Motor neuron (in vitro differentiated cells): ENCODE measurements at regions of chrX and their contacts with region 1.

Region 1: DNA sequence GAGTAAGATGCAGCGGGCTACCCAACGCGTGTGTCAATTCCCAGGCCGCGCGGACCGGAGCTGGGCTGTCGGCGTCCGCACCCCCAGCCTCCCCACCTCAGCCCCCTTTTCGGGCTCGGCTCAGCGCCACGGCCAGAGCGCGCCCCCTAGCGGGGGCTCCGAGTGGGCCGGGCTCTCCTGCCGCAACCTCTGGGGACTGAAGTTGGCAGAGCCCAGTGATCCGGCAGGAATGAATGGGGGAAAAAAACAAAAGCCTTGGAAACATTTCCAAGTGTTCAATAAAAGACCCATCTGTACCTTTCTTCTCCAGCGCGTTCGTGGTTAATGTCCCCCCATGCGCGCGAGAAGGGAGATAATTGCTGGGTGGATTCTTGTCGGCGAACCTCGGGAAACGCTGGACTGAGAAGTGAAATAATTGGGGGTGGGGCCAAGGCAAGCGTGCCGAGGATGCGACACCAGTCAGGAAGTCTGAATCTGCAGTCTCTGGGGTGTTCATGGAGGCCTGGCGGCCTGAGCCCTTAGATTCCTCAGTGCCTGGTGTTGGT is 5.2 kb upstream of the ARX start:
- ATAC-seq: peak; percentile 68 to 86 (median 78)
- H3K4me3 ChIP-seq: peak overlapping the region in 1 of 5 donors; percentile 23
- H3K27ac ChIP-seq: no peak overlapping the region
- H3K4me1 ChIP-seq: peaks cover 0 to 2% of the 10 kb centered on the region in 2 donors

Region 2: GRCh38 chrX:24760363-24761000 is 260.5 kb before region 1 on chrX:
- in situ Hi-C with region 1: loop called in 1 of 9 experiments (anchors 25 kb)
- ATAC-seq: peak in 3 of 8 experiments; percentile 54 to 72 (median 57)
- H3K4me3 ChIP-seq: no peak overlapping the region
- H3K27ac ChIP-seq: no peak overlapping the region
- H3K4me1 ChIP-seq: no peaks in the 10 kb centered on the region

Region 3: DNA sequence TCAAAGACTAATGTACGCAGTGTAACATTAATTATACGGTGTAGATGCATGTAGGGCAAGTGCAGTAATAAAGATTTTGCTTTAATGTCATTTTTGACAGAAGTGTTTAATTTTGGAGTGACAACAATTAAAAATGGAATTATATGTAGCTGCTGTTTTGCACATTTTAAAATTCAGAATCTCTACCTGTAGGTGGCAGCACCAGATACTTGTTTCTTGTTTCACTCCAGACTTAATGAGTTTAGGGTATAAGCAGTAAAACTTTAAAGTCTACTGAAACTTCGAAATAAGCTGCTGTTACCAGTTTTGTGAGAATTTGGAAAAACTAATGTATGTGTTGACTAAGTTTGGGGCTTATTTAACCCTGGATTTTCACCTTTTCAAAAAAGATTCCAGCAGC is 182.3 kb before region 1 on chrX:
- in situ Hi-C with region 1: loop called in 2 of 9 experiments (anchors 25 kb)
- ATAC-seq: peak in 1 of 8 experiments; percentile 23
- H3K4me3 ChIP-seq: no peak overlapping the region
- H3K27ac ChIP-seq: no peak overlapping the region
- H3K4me1 ChIP-seq: no peaks in the 10 kb centered on the region

Region 4: GRCh38 chrX:24870143-24870542 is 150.8 kb before region 1 on chrX:
- in situ Hi-C with region 1: no loop called
- ATAC-seq: no peak
- H3K4me3 ChIP-seq: no peak overlapping the region
- H3K27ac ChIP-seq: no peak overlapping the region
- H3K4me1 ChIP-seq: no peaks in the 10 kb centered on the region

Region 5: GRCh38 chrX:24920769-24921168 is 100.2 kb before region 1 on chrX:
- in situ Hi-C with region 1: no loop called
- ATAC-seq: no peak
- H3K4me3 ChIP-seq: no peak overlapping the region
- H3K27ac ChIP-seq: no peak overlapping the region
- H3K4me1 ChIP-seq: no peaks in the 10 kb centered on the region

Region 6: GRCh38 chrX:25503826-25504225 is 482.8 kb after region 1 on chrX:
- in situ Hi-C with region 1: no loop called
- ATAC-seq: no peak
- H3K4me3 ChIP-seq: no peak overlapping the region
- H3K27ac ChIP-seq: no peak overlapping the region
- H3K4me1 ChIP-seq: no peaks in the 10 kb centered on the region